CD4-positive, alpha-beta memory T cell (primary cell): ENCODE measurements at regions of chr5 and their contacts with region 1.

Region 1: DNA sequence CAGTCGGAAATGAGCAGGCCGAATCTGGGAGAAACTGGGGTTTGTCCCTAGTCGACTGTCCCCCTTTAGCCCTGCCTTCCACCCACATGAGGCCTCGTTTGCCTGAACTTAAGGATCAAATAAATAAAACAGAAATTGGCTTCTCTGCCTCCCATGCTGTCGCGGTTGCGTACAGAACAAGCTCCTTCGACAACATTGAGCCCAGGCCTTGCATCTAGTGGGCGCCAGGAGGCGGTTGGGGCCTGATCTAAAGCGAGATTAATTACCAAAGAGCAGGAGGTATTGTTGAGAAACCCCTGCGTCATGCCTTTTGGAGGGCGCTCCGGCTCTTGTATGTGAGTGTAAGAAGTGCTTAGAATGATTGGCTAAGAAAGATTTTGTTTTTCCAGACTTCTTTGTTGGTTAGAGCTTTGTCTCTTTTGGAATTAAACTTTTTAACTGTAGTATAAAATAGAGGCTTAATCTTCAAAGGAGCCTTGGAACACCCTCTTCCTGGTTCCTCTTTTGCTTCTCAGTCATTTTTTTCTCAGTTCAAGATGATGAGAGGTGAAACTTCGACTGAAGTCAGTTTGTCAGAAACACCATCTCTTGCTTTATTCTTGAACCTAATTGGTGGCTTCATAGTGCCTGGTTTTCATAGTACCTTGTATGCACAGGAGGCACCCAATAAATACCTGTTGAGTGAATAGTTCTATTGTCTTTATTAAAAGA is 827 bp downstream of the ATP6V0E1 start:
- DNase-seq: peak; percentile 75 to 91 (median 81)
- H3K4me3 ChIP-seq: peak overlapping the region; percentile 78 to 96
- H3K4me3 Mint-ChIP-seq: peak overlapping the region; percentile 92 to 99 (median 98)
- H3K27ac ChIP-seq: peak overlapping the region; percentile 94
- H3K27ac Mint-ChIP-seq: peak overlapping the region; percentile 95 to 99 (median 99)
- H3K4me1 ChIP-seq: peaks cover 55% of the 10 kb centered on the region
- H3K4me1 Mint-ChIP-seq: peaks cover 23 to 69% (median 46%) of the 10 kb centered on the region in 4 donors
- H3K27me3 ChIP-seq: no peaks in the 10 kb centered on the region
- H3K27me3 Mint-ChIP-seq: no peaks in the 10 kb centered on the region

Region 2: GRCh38 chr5:172958331-172959046 is 25.9 kb before region 1 on chr5:
- CTCF ChIA-PET with region 1: interaction called, 14 read pairs
- POLR2A ChIA-PET with region 1: interaction called, 21 read pairs
- intact Hi-C with region 1: loop called (anchors 1 kb)
- DNase-seq: peak; percentile 62 to 70 (median 67)
- H3K4me3 ChIP-seq: peak overlapping the region in 1 of 2 donors; percentile 97
- H3K4me3 Mint-ChIP-seq: peak overlapping the region; percentile 86 to 98 (median 96)
- H3K27ac ChIP-seq: peak overlapping the region; percentile 82
- H3K27ac Mint-ChIP-seq: peak overlapping the region; percentile 92 to 99 (median 98)
- H3K4me1 ChIP-seq: peaks cover 16% of the 10 kb centered on the region
- H3K4me1 Mint-ChIP-seq: peaks cover 18 to 43% (median 27%) of the 10 kb centered on the region in 4 donors
- H3K27me3 ChIP-seq: no peaks in the 10 kb centered on the region
- H3K27me3 Mint-ChIP-seq: no peaks in the 10 kb centered on the region

Region 3: GRCh38 chr5:172994405-172994804 is 10.0 kb after region 1 on chr5:
- CTCF ChIA-PET with region 1: interaction called, 7 read pairs
- POLR2A ChIA-PET with region 1: interaction called, 17 read pairs
- intact Hi-C with region 1: no loop called
- DNase-seq: no peak
- H3K4me3 ChIP-seq: no peak overlapping the region
- H3K4me3 Mint-ChIP-seq: no peak overlapping the region
- H3K27ac ChIP-seq: no peak overlapping the region
- H3K27ac Mint-ChIP-seq: peak overlapping the region in 2 of 7 donors; percentile 83 to 92
- H3K4me1 ChIP-seq: peaks cover 27% of the 10 kb centered on the region
- H3K4me1 Mint-ChIP-seq: peaks cover 26 to 49% (median 35%) of the 10 kb centered on the region in 4 donors
- H3K27me3 ChIP-seq: no peaks in the 10 kb centered on the region
- H3K27me3 Mint-ChIP-seq: no peaks in the 10 kb centered on the region

Region 4: GRCh38 chr5:173057062-173057924 is 72.9 kb after region 1 on chr5:
- CTCF ChIA-PET with region 1: interaction called, 15 read pairs
- POLR2A ChIA-PET with region 1: interaction called, 74 read pairs
- intact Hi-C with region 1: loop called (anchors 1 kb)
- DNase-seq: peak; percentile 97 to 99 (median 98)
- H3K4me3 ChIP-seq: peak overlapping the region; percentile 68 to 71
- H3K4me3 Mint-ChIP-seq: peak overlapping the region; percentile 92 to 98 (median 95)
- H3K27ac ChIP-seq: peak overlapping the region; percentile 95
- H3K27ac Mint-ChIP-seq: peak overlapping the region; percentile 90 to 96 (median 96)
- H3K4me1 ChIP-seq: peaks cover 50% of the 10 kb centered on the region
- H3K4me1 Mint-ChIP-seq: peaks cover 26 to 68% (median 47%) of the 10 kb centered on the region in 4 donors
- H3K27me3 ChIP-seq: no peaks in the 10 kb centered on the region
- H3K27me3 Mint-ChIP-seq: no peaks in the 10 kb centered on the region

Region 5: DNA sequence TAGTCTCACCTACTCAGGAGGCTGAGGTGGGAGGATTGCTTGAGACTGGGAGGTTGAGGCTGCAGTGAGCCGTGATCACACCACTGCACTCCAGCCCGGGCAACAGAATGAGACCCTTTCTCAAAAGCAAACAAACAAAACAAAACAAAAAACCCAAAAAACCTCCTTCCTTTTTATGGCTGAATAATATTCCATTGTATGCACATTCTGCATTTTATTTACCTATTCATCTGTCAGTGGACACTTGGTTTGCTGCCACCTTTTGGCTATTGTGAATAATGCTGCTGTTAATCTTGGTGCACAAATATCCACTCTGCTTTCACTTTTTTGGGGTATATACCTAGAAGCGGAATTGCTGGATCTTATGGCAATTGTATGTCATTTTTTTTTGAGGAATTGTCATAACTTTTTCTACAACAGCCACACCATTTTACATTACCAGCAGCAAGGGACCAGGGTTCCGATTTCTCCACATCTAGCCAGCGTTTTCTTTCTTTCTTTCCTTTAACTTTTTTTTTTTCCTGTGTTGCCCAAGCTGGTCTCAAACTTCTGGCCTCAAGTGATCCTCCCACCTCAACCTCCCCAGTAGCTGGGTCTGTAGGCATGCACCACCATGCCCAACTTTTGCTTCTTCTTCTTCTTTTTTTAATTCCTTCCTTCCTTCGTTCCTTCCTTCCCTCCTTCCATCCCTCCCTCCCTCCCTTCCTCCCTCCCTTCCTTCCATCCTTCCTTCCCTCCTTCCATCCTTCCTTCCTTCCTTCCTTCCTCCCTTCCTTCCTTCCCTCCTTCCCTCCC is 220.0 kb after region 1 on chr5:
- CTCF ChIA-PET with region 1: interaction called, 10 read pairs
- POLR2A ChIA-PET with region 1: no interaction called
- intact Hi-C with region 1: no loop called
- DNase-seq: peak in 4 of 5 donors; percentile 24 to 34 (median 30)
- H3K4me3 ChIP-seq: no peak overlapping the region
- H3K4me3 Mint-ChIP-seq: no peak overlapping the region
- H3K27ac ChIP-seq: no peak overlapping the region
- H3K27ac Mint-ChIP-seq: peak overlapping the region in 1 of 7 donors; percentile 57
- H3K4me1 ChIP-seq: no peaks in the 10 kb centered on the region
- H3K4me1 Mint-ChIP-seq: peaks cover 0 to 5% (median 2%) of the 10 kb centered on the region in 4 donors
- H3K27me3 ChIP-seq: peaks cover 7% of the 10 kb centered on the region
- H3K27me3 Mint-ChIP-seq: peaks cover 25 to 48% of the 10 kb centered on the region in 2 donors

Region 6: DNA sequence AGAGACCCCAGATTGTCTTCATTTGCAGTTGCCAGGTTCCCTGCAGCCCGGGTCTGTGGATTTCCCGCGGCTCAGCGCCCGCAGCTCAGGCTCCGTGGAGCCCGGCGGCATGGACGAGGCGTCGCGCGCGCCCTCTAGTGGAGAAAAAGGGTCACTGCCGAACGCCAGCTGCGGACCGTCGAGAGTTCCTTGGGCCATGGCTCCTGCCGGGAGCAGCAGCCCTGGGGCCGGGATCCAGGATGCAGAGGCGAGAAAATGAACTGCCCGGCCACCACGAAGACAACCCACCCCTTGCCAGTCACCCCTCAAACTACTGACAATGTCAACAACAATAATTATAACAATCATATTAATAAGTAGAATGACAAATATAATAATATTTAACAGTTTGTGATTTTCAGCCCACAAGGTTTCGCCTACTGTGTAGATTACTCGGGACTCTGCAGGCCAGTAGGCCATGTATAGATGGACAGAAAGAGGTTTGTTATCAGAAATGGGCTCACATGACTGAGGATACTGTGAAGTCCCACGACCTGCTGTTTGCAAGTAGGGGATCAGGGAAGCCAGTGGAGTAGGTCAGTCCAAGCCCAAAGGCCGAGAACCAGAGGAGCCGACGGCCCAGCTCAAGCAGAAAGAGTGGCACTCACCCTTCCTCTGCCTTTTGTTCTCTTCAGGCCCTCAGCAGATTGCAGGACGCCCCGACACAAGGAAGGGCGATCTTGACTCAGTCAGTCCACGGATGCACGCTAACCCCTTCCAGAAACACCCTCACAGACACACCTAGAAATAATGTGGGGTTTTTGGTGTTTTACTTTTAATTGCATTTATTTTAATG is 588.9 kb after region 1 on chr5:
- CTCF ChIA-PET with region 1: interaction called, 3 read pairs
- POLR2A ChIA-PET with region 1: no interaction called
- intact Hi-C with region 1: loop called (anchors 2 kb)
- DNase-seq: peak; percentile 39 to 53 (median 50)
- H3K4me3 ChIP-seq: peak overlapping the region in 1 of 2 donors; percentile 19
- H3K4me3 Mint-ChIP-seq: peak overlapping the region in 2 of 8 donors; percentile 6
- H3K27ac ChIP-seq: no peak overlapping the region
- H3K27ac Mint-ChIP-seq: peak overlapping the region in 1 of 7 donors; percentile 20
- H3K4me1 ChIP-seq: peaks cover 4% of the 10 kb centered on the region
- H3K4me1 Mint-ChIP-seq: peaks cover 3 to 10% (median 6%) of the 10 kb centered on the region in 4 donors
- H3K27me3 ChIP-seq: peaks cover 5% of the 10 kb centered on the region
- H3K27me3 Mint-ChIP-seq: peaks cover 8 to 20% of the 10 kb centered on the region in 2 donors

Region 7: DNA sequence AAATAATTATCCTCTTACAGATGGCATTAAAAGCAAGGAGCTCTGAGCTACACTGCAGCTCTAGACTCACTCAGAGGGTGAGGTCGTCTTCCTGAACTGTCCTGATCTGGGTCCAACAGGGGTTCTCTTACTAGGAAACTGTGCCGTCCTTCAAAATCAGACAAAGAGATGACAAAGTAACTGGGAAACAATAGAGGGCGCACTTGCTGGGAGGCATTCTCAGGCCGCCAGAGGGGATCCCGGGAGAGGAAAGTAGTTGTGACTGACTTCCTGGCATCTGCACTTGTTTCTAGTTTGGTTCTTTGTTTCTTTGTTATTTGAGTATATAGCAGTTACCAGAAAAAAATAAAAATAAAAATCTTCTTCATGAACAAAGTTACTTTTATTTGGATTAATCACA is 1597.1 kb after region 1 on chr5:
- CTCF ChIA-PET with region 1: no interaction called
- POLR2A ChIA-PET with region 1: no interaction called
- intact Hi-C with region 1: no loop called
- DNase-seq: no peak
- H3K4me3 ChIP-seq: no peak overlapping the region
- H3K4me3 Mint-ChIP-seq: no peak overlapping the region
- H3K27ac ChIP-seq: no peak overlapping the region
- H3K27ac Mint-ChIP-seq: no peak overlapping the region
- H3K4me1 ChIP-seq: no peaks in the 10 kb centered on the region
- H3K4me1 Mint-ChIP-seq: peaks cover 0 to 1% (median 0%) of the 10 kb centered on the region in 4 donors
- H3K27me3 ChIP-seq: no peaks in the 10 kb centered on the region
- H3K27me3 Mint-ChIP-seq: peaks cover 0 to 2% of the 10 kb centered on the region in 2 donors